ENCODE measurements at regions of chr3 and their contacts with region 1.

Region 1: GRCh38 chr3:58433400-58434169 is at the start of gene PDHB:
- DNase-seq: peak; percentile 97
- H3K4me3 ChIP-seq: peak within 1 kb of the TSS; percentile 62 to 80 (median 74)
- H3K27ac ChIP-seq: peak within 1 kb of the TSS; percentile 87 to 94 (median 90)
- H3K4me1 ChIP-seq: peaks cover 0 to 49% (median 34%) of the 10 kb centered on the region in 4 donors
- H3K27me3 ChIP-seq: no peaks in the 10 kb centered on the region
- CTCF ChIP-seq: no peak
- EP300 ChIP-seq: no peak
- POLR2A ChIP-seq: peak; percentile 70 to 80
- total RNA-seq, gene PDHB: 92.0 to 105 (median 98.9) TPM

Region 2: DNA sequence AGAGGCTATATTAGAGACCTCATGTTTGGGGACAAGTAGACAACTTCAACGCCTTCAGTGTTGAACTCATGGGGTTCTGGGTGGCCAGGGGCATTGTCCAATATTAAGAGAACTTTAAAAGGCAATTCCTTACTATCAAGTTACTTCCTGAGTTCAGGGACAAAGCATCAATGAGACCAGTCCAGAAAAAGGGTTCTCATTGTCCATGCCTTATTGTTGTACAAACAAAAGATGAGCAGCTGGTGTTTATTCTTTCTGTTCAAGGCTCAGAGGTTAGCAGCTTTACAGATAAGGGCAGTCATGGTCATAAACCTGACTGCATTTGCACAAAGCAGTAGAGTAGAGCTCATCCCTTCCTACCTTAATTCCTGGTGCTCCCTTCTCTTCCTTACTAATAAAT is 18.6 kb after region 1 on chr3:
- intact Hi-C with region 1: no loop called
- DNase-seq: no peak
- H3K4me3 ChIP-seq: no peak overlapping the region
- H3K27ac ChIP-seq: no peak overlapping the region
- H3K4me1 ChIP-seq: no peaks in the 10 kb centered on the region
- H3K27me3 ChIP-seq: no peaks in the 10 kb centered on the region
- CTCF ChIP-seq: no peak
- EP300 ChIP-seq: no peak
- POLR2A ChIP-seq: no peak

Region 3: GRCh38 chr3:58491506-58492402 is 58.2 kb after region 1 on chr3 and contains the start of gene KCTD6:
- intact Hi-C with region 1: loop called (anchors 2 kb)
- DNase-seq: peak; percentile 95
- H3K4me3 ChIP-seq: peak within 1 kb of the TSS; percentile 77 to 96 (median 87)
- H3K27ac ChIP-seq: peak within 1 kb of the TSS; percentile 83 to 95 (median 87)
- H3K4me1 ChIP-seq: peaks cover 0 to 57% (median 38%) of the 10 kb centered on the region in 4 donors
- H3K27me3 ChIP-seq: no peaks in the 10 kb centered on the region
- CTCF ChIP-seq: peak in 2 of 4 experiments; percentile 28 to 63
- EP300 ChIP-seq: no peak
- POLR2A ChIP-seq: no peak
- total RNA-seq, gene KCTD6: 11.0 to 25.3 (median 17.7) TPM